Naive thymus-derived CD4-positive, alpha-beta T cell (primary cell): ENCODE measurements at regions of chr3 and their contacts with region 1.

Region 1: DNA sequence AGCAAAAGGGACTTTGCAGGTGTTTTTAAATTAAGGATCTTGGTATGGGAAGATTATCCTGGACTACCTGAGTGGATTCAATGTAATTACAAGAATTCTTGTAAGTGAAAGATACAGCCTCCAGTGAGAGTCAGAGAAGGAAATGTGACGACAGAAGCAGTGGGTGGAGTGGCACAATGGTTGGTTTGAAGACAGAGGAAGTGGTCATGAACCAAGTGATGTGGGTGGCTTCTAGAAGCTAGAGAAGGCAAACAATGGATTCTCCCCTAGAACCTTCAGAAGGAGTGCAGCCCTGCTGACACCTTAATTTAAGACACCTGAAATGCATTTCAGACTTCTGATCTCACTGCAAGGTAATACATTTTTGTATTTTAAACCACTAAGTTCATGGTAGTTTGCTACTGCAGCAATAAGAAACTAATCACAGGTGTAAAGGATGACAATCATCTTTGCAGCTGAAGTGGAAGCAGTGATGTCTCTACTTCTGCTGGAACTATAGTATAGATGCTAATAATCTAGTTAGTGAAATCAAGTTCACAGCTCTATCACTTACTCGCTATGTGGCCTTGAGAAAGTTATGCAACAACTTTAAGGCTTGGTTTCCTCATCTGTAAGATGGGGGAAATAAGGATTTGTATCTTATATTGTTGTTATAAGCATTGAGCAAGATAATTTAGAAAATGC is 403.4 kb upstream of the SUCLG2 start:
- DNase-seq: peak; percentile 16 to 94 (median 91)
- ATAC-seq: peak; percentile 99
- H3K4me3 ChIP-seq: peak overlapping the region; percentile 27
- H3K4me3 Mint-ChIP-seq: peak overlapping the region; percentile 33 to 85 (median 68)
- H3K27ac ChIP-seq: peak overlapping the region; percentile 62
- H3K27ac Mint-ChIP-seq: peak overlapping the region; percentile 57 to 93 (median 83)
- H3K4me1 ChIP-seq: peaks cover 11 to 54% of the 10 kb centered on the region in 2 donors
- H3K4me1 Mint-ChIP-seq: peaks cover 30 to 87% (median 82%) of the 10 kb centered on the region in 7 donors
- H3K27me3 ChIP-seq: no peaks in the 10 kb centered on the region
- H3K27me3 Mint-ChIP-seq: no peaks in the 10 kb centered on the region

Region 2: GRCh38 chr3:66998113-66998903 is 1059.5 kb before region 1 on chr3 and contains the start of gene KBTBD8:
- CTCF ChIA-PET with region 1: no interaction called
- POLR2A ChIA-PET with region 1: no interaction called
- intact Hi-C with region 1: loop called (anchors 1 to 2 kb)
- DNase-seq: peak; percentile 87 to 99 (median 98)
- ATAC-seq: peak; percentile 97
- H3K4me3 ChIP-seq: peak within 1 kb of the TSS; percentile 69
- H3K4me3 Mint-ChIP-seq: peak within 1 kb of the TSS; percentile 85 to 99 (median 96)
- H3K27ac ChIP-seq: peak within 1 kb of the TSS; percentile 75
- H3K27ac Mint-ChIP-seq: peak within 1 kb of the TSS; percentile 68 to 96 (median 93)
- H3K4me1 ChIP-seq: peaks cover 7 to 19% of the 10 kb centered on the region in 2 donors
- H3K4me1 Mint-ChIP-seq: peaks cover 4 to 39% (median 27%) of the 10 kb centered on the region in 7 donors
- H3K27me3 ChIP-seq: no peaks in the 10 kb centered on the region
- H3K27me3 Mint-ChIP-seq: peaks cover 10 to 33% (median 27%) of the 10 kb centered on the region in 5 donors
- total RNA-seq, gene KBTBD8: 4.5 to 14.6 (median 9.5) TPM

Region 3: DNA sequence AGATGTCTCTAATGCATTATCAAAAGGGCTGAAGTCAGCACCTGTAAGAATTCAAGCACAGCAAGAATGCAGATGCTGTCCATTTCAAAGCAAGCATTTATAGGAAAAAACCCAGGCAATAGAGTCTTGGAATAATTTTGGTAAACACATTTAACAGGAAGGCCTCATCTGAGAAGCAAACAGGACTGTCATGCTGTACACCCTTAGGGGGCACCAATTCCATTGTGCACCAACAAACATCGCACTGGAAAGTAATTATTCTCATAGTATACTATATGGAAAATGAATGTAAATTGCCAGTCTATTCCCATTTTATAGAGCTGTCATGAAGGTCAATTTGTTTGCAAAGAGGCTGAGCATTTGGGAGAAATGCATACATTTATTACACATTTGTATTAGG is 156.1 kb before region 1 on chr3:
- CTCF ChIA-PET with region 1: no interaction called
- POLR2A ChIA-PET with region 1: no interaction called
- intact Hi-C with region 1: loop called in 1 of 2 experiments (anchors 5 kb)
- DNase-seq: peak in 5 of 9 donors; percentile 17 to 31 (median 24)
- ATAC-seq: peak; percentile 31
- H3K4me3 ChIP-seq: no peak overlapping the region
- H3K4me3 Mint-ChIP-seq: no peak overlapping the region
- H3K27ac ChIP-seq: no peak overlapping the region
- H3K27ac Mint-ChIP-seq: no peak overlapping the region
- H3K4me1 ChIP-seq: peaks cover 0 to under 1% of the 10 kb centered on the region in 2 donors
- H3K4me1 Mint-ChIP-seq: peaks cover 0 to 19% (median 13%) of the 10 kb centered on the region in 7 donors
- H3K27me3 ChIP-seq: no peaks in the 10 kb centered on the region
- H3K27me3 Mint-ChIP-seq: no peaks in the 10 kb centered on the region

Region 4: GRCh38 chr3:67947808-67948508 is 109.8 kb before region 1 on chr3:
- CTCF ChIA-PET with region 1: interaction called, 7 read pairs
- POLR2A ChIA-PET with region 1: interaction called, 3 read pairs
- intact Hi-C with region 1: loop called (anchors 1 to 5 kb)
- DNase-seq: peak in 8 of 9 donors; percentile 25 to 92 (median 84)
- ATAC-seq: peak; percentile 97
- H3K4me3 ChIP-seq: peak overlapping the region; percentile 40
- H3K4me3 Mint-ChIP-seq: peak overlapping the region; percentile 76 to 92 (median 83)
- H3K27ac ChIP-seq: peak overlapping the region; percentile 38
- H3K27ac Mint-ChIP-seq: peak overlapping the region; percentile 76 to 97 (median 91)
- H3K4me1 ChIP-seq: peaks cover 6 to 26% of the 10 kb centered on the region in 2 donors
- H3K4me1 Mint-ChIP-seq: peaks cover 11 to 54% (median 39%) of the 10 kb centered on the region in 7 donors
- H3K27me3 ChIP-seq: no peaks in the 10 kb centered on the region
- H3K27me3 Mint-ChIP-seq: no peaks in the 10 kb centered on the region

Region 5: DNA sequence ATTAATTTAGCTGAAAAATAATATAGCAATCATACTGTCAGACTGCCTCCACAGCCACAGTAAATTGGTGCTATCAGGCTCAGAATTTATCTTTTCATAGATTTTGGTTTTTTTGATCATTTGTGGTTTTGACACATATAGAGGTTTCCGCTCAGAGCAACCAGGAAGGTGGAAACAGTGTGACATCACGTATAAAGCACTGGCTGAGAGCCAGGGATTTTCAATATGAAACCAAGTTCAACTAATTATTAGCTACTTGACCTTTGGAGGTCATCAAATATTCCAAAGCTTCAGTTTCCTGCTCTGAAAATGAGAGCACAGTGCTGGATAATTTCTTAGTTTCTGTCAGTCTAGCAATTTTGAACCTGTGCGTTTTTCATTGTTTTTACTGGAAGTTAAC is 30.4 kb after region 1 on chr3:
- CTCF ChIA-PET with region 1: interaction called, 3 read pairs
- POLR2A ChIA-PET with region 1: interaction called, 9 read pairs
- intact Hi-C with region 1: loop called (anchors 1 kb)
- DNase-seq: peak in 7 of 9 donors; percentile 61 to 81 (median 74)
- ATAC-seq: peak; percentile 86
- H3K4me3 ChIP-seq: peak overlapping the region; percentile 23
- H3K4me3 Mint-ChIP-seq: peak overlapping the region; percentile 8 to 75 (median 39)
- H3K27ac ChIP-seq: no peak overlapping the region
- H3K27ac Mint-ChIP-seq: peak overlapping the region in 8 of 9 donors; percentile 1 to 85 (median 48)
- H3K4me1 ChIP-seq: peaks cover 27 to 37% of the 10 kb centered on the region in 2 donors
- H3K4me1 Mint-ChIP-seq: peaks cover 25 to 85% (median 71%) of the 10 kb centered on the region in 7 donors
- H3K27me3 ChIP-seq: no peaks in the 10 kb centered on the region
- H3K27me3 Mint-ChIP-seq: peaks cover 0 to 4% (median 0%) of the 10 kb centered on the region in 5 donors